Heart left ventricle (tissue), 16 donors: ENCODE measurements at regions of chr1 and their contacts with region 1.

Region 1: GRCh38 chr1:87348341-87348999 is 19.8 kb downstream of the LMO4 start:
- DNase-seq: no peak
- ATAC-seq: no peak
- H3K4me3 ChIP-seq: no peak overlapping the region
- H3K27ac ChIP-seq: no peak overlapping the region
- H3K4me1 ChIP-seq: peaks cover 0 to 14% (median 0%) of the 10 kb centered on the region in 12 donors
- H3K27me3 ChIP-seq: no peaks in the 10 kb centered on the region
- CTCF ChIP-seq: no peak
- POLR2A ChIP-seq: no peak

Region 2: GRCh38 chr1:87513255-87513654 is 164.8 kb after region 1 on chr1:
- intact Hi-C with region 1: no loop called
- DNase-seq: no peak
- ATAC-seq: no peak
- H3K4me3 ChIP-seq: no peak overlapping the region
- H3K27ac ChIP-seq: no peak overlapping the region
- H3K4me1 ChIP-seq: peaks cover 0 to 2% (median 0%) of the 10 kb centered on the region in 12 donors
- H3K27me3 ChIP-seq: no peaks in the 10 kb centered on the region
- CTCF ChIP-seq: no peak
- POLR2A ChIP-seq: no peak

Region 3: GRCh38 chr1:87953732-87954344 is 605.4 kb after region 1 on chr1:
- intact Hi-C with region 1: loop called in 1 of 10 experiments (anchors 5 kb)
- DNase-seq: peak in 4 of 5 donors; percentile 56 to 59 (median 58)
- ATAC-seq: peak in 3 of 4 donors; percentile 69 to 83 (median 76)
- H3K4me3 ChIP-seq: no peak overlapping the region
- H3K27ac ChIP-seq: no peak overlapping the region
- H3K4me1 ChIP-seq: peaks cover 0 to 19% (median 0%) of the 10 kb centered on the region in 12 donors
- H3K27me3 ChIP-seq: no peaks in the 10 kb centered on the region
- CTCF ChIP-seq: peak; percentile 51 to 89 (median 77)
- POLR2A ChIP-seq: no peak